ENCODE measurements at regions of chr10 and their contacts with region 1.

Region 1: GRCh38 chr10:46106410-46107255 is 60.6 kb upstream of the MSMB start:
- DNase-seq: peak; percentile 73
- ATAC-seq: peak; percentile 97
- H3K4me3 ChIP-seq: peak overlapping the region; percentile 66 to 78 (median 75)
- H3K27ac ChIP-seq: no peak overlapping the region
- H3K4me1 ChIP-seq: peaks cover 46% of the 10 kb centered on the region
- H3K27me3 ChIP-seq: peaks cover 0 to 8% of the 10 kb centered on the region in 2 experiments; a peak in 3 of 5 replicates
- CTCF ChIP-seq: peak; percentile 33; the same call in 1 of the 2 replicates
- EP300 ChIP-seq: no peak
- POLR2A ChIP-seq: peak in 1 of 2 experiments; percentile 52; a peak in 1 of 4 replicates
- RAD21 ChIP-seq: no peak; the same call in 1 of the 2 replicates

Region 2: GRCh38 chr10:46284293-46285229 is 177.9 kb after region 1 on chr10:
- CTCF ChIA-PET with region 1: no interaction called
- POLR2A ChIA-PET with region 1: interaction called, 4 read pairs
- in situ Hi-C with region 1: loop called (anchors 10 kb)
- intact Hi-C with region 1: no loop called
- DNase-seq: peak; percentile 31
- ATAC-seq: peak; percentile 91
- H3K4me3 ChIP-seq: peak overlapping the region; percentile 44 to 71 (median 53)
- H3K27ac ChIP-seq: no peak overlapping the region
- H3K4me1 ChIP-seq: no peaks in the 10 kb centered on the region
- H3K27me3 ChIP-seq: peaks cover 4 to 71% of the 10 kb centered on the region in 2 experiments; a peak in 4 of 5 replicates
- CTCF ChIP-seq: no peak
- EP300 ChIP-seq: no peak
- POLR2A ChIP-seq: no peak
- RAD21 ChIP-seq: 0 out of 2 replicates have a peak, but pooled peaks have one; percentile 11

Region 3: GRCh38 chr10:46311501-46312441 is 205.1 kb after region 1 on chr10:
- CTCF ChIA-PET with region 1: no interaction called
- POLR2A ChIA-PET with region 1: no interaction called
- in situ Hi-C with region 1: no loop called
- intact Hi-C with region 1: no loop called
- DNase-seq: no peak
- ATAC-seq: no peak
- H3K4me3 ChIP-seq: no peak overlapping the region
- H3K27ac ChIP-seq: no peak overlapping the region
- H3K4me1 ChIP-seq: no peaks in the 10 kb centered on the region
- H3K27me3 ChIP-seq: peaks cover 3 to 46% of the 10 kb centered on the region in 2 experiments; a peak in 2 of 5 replicates
- CTCF ChIP-seq: no peak
- EP300 ChIP-seq: no peak
- POLR2A ChIP-seq: no peak
- RAD21 ChIP-seq: no peak

Measured in HepG2 (cell line).